ENCODE measurements at regions of chr1 and their contacts with region 1.

Region 1: DNA sequence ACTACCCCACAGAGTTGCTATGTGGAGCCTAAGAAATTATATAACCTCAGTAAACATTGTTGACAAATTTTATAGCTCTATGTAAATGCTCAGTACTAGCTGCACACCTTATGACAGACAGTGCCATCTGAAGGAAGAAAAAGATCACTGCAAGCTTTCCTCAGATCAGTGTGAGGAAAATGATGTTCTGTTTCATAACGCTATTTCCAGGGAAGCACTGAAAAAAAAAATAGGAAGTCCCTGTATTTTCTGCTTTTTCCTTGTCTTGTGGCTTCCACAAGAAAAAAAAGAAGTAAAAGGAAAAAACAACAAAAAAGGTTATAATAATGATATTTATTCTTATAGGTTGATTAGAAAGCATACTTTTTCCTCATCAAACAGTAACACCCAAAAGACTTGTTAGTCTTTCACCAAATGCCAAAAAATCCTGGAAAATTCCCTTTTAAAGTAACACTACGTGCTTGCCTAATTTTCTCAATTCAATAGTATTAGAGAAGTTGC is 23.2 kb downstream of the LYST start:
- DNase-seq: no peak
- ATAC-seq: peak; percentile 60
- H3K4me3 Mint-ChIP-seq: no peak overlapping the region
- H3K27ac Mint-ChIP-seq: peak overlapping the region; percentile 62
- H3K4me1 Mint-ChIP-seq: peaks cover 86% of the 10 kb centered on the region
- H3K27me3 Mint-ChIP-seq: no peaks in the 10 kb centered on the region
- CTCF ChIP-seq: no peak

Region 2: GRCh38 chr1:235767795-235768194 is 75.7 kb before region 1 on chr1:
- CTCF ChIA-PET with region 1: interaction called, 3 read pairs
- POLR2A ChIA-PET with region 1: no interaction called
- intact Hi-C with region 1: loop called (anchors 5 kb)
- DNase-seq: no peak
- ATAC-seq: peak; percentile 89
- H3K4me3 Mint-ChIP-seq: no peak overlapping the region
- H3K27ac Mint-ChIP-seq: no peak overlapping the region
- H3K4me1 Mint-ChIP-seq: peaks cover 20% of the 10 kb centered on the region
- H3K27me3 Mint-ChIP-seq: no peaks in the 10 kb centered on the region
- CTCF ChIP-seq: no peak

Region 3: GRCh38 chr1:235783148-235783776 is 60.2 kb before region 1 on chr1:
- CTCF ChIA-PET with region 1: interaction called, 24 read pairs
- POLR2A ChIA-PET with region 1: no interaction called
- intact Hi-C with region 1: loop called (anchors 1 kb)
- DNase-seq: no peak
- ATAC-seq: no peak
- H3K4me3 Mint-ChIP-seq: no peak overlapping the region
- H3K27ac Mint-ChIP-seq: no peak overlapping the region
- H3K4me1 Mint-ChIP-seq: no peaks in the 10 kb centered on the region
- H3K27me3 Mint-ChIP-seq: no peaks in the 10 kb centered on the region
- CTCF ChIP-seq: no peak

Region 4: GRCh38 chr1:235831148-235831547 is 12.4 kb before region 1 on chr1:
- CTCF ChIA-PET with region 1: interaction called, 20 read pairs
- POLR2A ChIA-PET with region 1: interaction called, 30 read pairs
- intact Hi-C with region 1: loop called (anchors 1 kb)
- DNase-seq: no peak
- ATAC-seq: peak; percentile 100
- H3K4me3 Mint-ChIP-seq: peak overlapping the region; percentile 13
- H3K27ac Mint-ChIP-seq: peak overlapping the region; percentile 84
- H3K4me1 Mint-ChIP-seq: peaks cover 20% of the 10 kb centered on the region
- H3K27me3 Mint-ChIP-seq: no peaks in the 10 kb centered on the region
- CTCF ChIP-seq: no peak

Region 5: DNA sequence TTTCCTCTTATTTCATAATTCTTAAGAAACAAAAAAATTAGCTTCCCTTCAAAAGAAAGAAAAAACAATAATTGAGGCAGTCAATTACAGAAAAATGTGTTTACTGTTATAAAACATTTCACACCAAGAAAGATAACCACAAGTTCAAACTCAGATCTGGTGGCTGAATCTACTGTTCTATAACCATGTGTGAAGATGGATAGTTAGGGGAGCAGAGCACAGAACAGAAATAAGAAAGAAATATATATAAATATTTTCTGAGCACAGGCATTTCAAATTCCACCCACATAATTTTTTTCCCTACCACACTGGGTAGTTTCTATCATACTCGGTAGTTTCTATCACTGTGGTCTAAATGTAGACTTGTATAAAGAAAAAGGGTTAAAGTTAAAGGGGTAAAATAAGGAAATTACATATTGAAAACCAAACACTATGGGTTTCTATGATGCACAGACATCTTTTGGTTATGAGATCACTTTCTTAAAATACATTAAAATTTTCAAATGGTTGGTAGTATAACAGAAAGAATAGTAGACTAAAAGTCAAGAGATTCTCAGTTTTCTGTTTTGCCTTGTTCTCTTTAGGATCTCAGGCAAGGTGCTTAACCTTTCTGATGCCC is 12.4 kb after region 1 on chr1:
- CTCF ChIA-PET with region 1: interaction called, 27 read pairs
- POLR2A ChIA-PET with region 1: interaction called, 10 read pairs
- intact Hi-C with region 1: no loop called
- DNase-seq: no peak
- ATAC-seq: peak; percentile 40
- H3K4me3 Mint-ChIP-seq: no peak overlapping the region
- H3K27ac Mint-ChIP-seq: peak overlapping the region; percentile 54
- H3K4me1 Mint-ChIP-seq: peaks cover 56% of the 10 kb centered on the region
- H3K27me3 Mint-ChIP-seq: no peaks in the 10 kb centered on the region
- CTCF ChIP-seq: no peak